Activated CD4-positive, alpha-beta T cell treated with anti-CD3 and anti-CD28 coated beads, Interleukin-2, amount 10 ng/mL, durations not matched to agents 24 days and 14 days (primary cell): ENCODE measurements at regions of chr12 and their contacts with region 1.

Region 1: DNA sequence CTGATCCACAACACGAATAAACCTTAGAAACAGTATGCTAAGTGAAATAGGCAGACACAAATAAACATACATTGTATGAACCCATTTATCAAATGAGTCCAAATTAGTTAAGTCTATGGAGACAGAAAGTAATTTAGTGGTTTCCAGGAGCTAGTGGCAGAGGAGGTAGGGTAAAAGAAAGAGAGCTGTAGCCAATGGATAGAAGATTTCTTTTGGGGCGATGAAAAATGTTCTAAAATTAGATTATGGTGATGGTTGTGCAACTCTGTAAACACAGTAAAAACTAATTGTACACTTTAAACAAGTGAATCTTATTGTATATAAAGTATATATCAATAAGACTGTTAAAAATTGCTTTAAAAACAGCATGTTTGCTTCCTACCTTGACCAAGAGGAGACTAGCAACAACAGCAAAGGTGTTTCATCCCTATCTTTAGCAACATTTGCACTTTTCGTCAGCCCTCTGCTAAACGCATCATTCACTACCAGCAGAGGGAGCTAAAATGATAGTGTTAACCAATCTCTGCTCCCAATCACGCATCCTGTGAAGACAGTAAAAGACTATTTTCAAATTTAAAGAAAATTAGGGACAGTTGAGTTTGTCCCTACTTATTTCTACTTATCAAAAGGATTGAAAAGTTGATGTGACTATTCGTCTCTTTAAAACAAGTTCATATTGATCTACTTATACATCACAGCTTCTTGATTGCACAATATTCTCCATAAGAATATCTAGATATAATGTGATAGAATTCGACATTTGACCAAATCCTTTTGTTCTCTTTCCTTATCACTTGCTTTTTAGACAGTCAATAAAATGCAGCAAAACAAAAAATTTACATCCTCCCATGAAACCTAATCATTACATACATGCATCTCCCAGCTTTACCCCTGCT is 24.0 kb upstream of the LGR5 start:
- DNase-seq: peak; percentile 80
- H3K4me3 Mint-ChIP-seq: no peak overlapping the region
- H3K27ac Mint-ChIP-seq: no peak overlapping the region
- H3K4me1 Mint-ChIP-seq: no peaks in the 10 kb centered on the region
- H3K27me3 Mint-ChIP-seq: peaks cover 8% of the 10 kb centered on the region

Region 2: DNA sequence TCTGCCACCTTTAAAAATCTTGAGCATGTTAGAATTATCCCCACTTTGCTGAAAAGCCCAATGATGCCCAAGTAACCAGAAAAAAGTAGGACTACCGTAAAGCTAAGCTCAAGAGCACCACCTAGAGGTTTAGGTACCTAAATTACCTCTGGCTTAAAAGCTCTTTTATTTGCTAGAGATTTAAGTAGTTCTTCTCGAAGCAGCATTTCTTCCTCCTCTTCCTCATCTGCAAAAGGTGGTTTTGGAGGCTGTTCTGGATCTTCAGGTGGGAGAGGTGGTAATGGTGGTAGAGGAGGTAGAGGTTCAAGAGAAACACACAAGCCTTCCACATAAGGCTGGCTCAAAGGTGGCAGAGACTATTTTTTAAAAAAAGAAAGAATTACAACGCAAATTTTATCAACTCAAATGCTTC is 221.1 kb after region 1 on chr12:
- intact Hi-C with region 1: loop called (anchors 1 kb)
- DNase-seq: peak; percentile 76
- H3K4me3 Mint-ChIP-seq: no peak overlapping the region
- H3K27ac Mint-ChIP-seq: peak overlapping the region; percentile 67
- H3K4me1 Mint-ChIP-seq: peaks cover 10% of the 10 kb centered on the region
- H3K27me3 Mint-ChIP-seq: no peaks in the 10 kb centered on the region